Panc1 (cell line): ENCODE measurements at regions of chr6 and their contacts with region 1.

Region 1: DNA sequence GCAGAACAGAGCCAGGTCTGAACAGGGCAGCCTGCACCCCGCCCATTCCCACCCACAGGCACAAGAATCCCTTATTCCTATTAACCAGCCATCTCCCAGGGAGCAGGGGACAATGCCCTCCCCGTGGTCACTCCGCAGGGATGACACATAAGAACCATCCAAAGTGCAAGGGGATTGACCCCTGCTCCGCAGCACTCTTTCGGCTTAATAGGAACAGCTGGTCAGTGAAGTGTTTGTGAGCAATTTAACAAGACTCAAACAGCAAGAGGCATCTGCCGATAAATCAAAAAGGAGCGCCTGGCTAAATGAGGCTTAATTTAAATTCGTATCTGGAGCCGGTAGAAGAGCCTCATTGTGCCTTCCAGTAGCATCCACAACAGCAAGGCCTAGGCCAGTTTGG is 389.4 kb downstream of the RNGTT start:
- DNase-seq: no peak
- ATAC-seq: no peak
- H3K4me3 ChIP-seq: no peak overlapping the region
- H3K27ac ChIP-seq: no peak overlapping the region
- H3K4me1 ChIP-seq: no peaks in the 10 kb centered on the region
- H3K27me3 ChIP-seq: 0 out of 2 replicates have a peak, but pooled peaks cover 3% of the 10 kb centered on the region
- CTCF ChIP-seq: no peak

Region 2: GRCh38 chr6:88238065-88238464 is 336.0 kb before region 1 on chr6:
- CTCF ChIA-PET with region 1: interaction called, 11 read pairs
- POLR2A ChIA-PET with region 1: no interaction called
- in situ Hi-C with region 1: no loop called
- intact Hi-C with region 1: no loop called
- DNase-seq: peak; percentile 12
- ATAC-seq: no peak; the same call in 1 of the 2 replicates
- H3K4me3 ChIP-seq: no peak overlapping the region
- H3K27ac ChIP-seq: no peak overlapping the region
- H3K4me1 ChIP-seq: no peaks in the 10 kb centered on the region
- H3K27me3 ChIP-seq: no peaks in the 10 kb centered on the region
- CTCF ChIP-seq: peak; percentile 61